PC-9 (cell line): ENCODE measurements at regions of chr5 and their contacts with region 1.

Region 1: GRCh38 chr5:78509884-78510769 is 138.4 kb downstream of the LHFPL2 start:
- DNase-seq: peak in 1 of 2 experiments; percentile 70
- H3K4me3 ChIP-seq: peak overlapping the region; percentile 45
- H3K27ac ChIP-seq: 0 out of 2 replicates have a peak overlapping the region, but pooled peaks have one; percentile 98
- H3K4me1 ChIP-seq: peaks cover 53% of the 10 kb centered on the region
- H3K27me3 ChIP-seq: no peaks in the 10 kb centered on the region
- CTCF ChIP-seq: no peak; the same call in 1 of the 2 replicates

Region 2: DNA sequence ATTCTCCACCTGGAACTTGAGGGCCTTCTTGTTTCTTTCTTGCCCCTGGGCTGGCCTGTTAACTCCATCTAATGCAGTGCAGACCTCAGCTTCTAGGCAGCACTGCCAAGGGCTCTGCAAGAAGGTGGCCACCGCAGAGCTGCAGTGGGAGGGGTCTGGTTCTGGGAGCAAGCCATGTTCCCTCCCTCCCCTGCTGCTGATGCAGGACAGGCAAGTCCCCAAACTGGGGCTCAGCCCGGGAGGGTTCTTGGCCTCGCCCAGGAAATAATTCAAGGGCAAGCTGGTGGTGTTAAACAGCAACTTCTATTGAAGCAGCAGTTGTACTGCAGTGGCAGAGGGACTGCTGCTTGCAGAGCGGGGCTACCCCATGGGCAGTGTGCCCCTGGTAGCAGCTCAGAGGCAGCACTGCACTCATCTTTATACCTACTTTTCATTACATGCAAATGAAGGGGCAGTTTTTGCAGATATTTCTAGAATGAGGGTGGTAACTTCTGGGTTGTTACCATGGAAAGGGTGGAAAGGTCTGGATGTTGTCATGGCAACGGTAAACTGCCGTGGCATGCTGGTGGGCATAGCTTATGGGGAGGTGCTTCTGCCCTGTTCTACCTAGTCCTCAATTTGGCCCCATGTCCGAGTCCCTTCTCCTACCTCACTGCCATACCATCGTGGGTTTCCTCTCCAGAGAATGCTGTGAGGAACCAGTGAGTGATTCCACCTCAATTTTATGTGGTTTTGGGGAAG is 1100.1 kb before region 1 on chr5:
- CTCF ChIA-PET with region 1: no interaction called
- POLR2A ChIA-PET with region 1: no interaction called
- intact Hi-C with region 1: no loop called
- DNase-seq: no peak
- H3K4me3 ChIP-seq: no peak overlapping the region
- H3K27ac ChIP-seq: no peak overlapping the region
- H3K4me1 ChIP-seq: no peaks in the 10 kb centered on the region
- H3K27me3 ChIP-seq: peaks cover 8% of the 10 kb centered on the region; the same call in 1 of the 2 replicates
- CTCF ChIP-seq: no peak

Region 3: DNA sequence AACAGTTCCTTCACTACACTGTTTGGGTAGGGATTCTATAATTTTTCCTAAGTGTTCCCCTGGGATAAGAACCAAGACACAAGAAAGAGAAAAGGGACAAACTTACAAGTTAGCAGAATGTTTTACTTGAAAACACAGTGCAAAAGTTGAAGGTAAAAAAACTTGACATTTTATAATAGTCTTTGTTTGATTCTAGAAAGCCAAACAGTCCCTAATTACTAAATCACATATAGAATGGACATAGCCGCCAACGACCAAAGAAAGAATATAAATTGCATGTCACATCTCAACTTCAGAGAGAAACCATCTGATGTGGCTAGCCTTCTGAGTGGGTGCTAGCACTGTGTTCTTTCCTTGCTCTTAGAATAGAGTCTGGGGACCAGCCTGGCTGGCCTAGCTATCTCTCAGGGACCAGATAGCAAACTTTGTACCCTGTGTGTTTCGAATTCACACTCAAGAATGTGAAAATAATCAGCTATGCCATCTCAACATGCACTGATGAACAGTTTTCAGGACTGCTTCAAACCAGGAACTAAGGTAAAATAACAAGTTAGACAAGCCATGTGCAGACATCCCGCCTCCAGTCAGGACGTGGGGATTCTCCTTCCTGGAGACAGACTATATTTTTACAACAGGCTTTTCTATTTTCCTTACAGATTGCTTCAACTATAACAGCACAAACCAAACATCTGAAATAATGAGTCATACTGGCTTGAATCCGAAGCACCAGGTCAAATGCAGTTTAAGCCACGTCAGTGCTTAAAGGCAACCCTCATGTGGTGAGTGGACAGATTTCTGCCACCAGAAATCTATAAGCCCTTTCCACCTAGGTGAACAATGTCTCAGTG is 84.7 kb after region 1 on chr5:
- CTCF ChIA-PET with region 1: no interaction called
- POLR2A ChIA-PET with region 1: no interaction called
- intact Hi-C with region 1: loop called (anchors 10 kb)
- DNase-seq: peak; percentile 70 to 99
- H3K4me3 ChIP-seq: no peak overlapping the region
- H3K27ac ChIP-seq: peak overlapping the region; percentile 95
- H3K4me1 ChIP-seq: peaks cover 92% of the 10 kb centered on the region
- H3K27me3 ChIP-seq: no peaks in the 10 kb centered on the region
- CTCF ChIP-seq: no peak

Region 4: GRCh38 chr5:78648359-78649210 is 138.5 kb after region 1 on chr5 and contains the start of gene LHFPL2:
- CTCF ChIA-PET with region 1: no interaction called
- POLR2A ChIA-PET with region 1: interaction called, 3 read pairs
- intact Hi-C with region 1: loop called (anchors 5 kb)
- DNase-seq: peak in 1 of 2 experiments; percentile 77
- H3K4me3 ChIP-seq: peak within 1 kb of the TSS; percentile 85
- H3K27ac ChIP-seq: peak within 1 kb of the TSS; percentile 75
- H3K4me1 ChIP-seq: peaks cover 12% of the 10 kb centered on the region
- H3K27me3 ChIP-seq: no peaks in the 10 kb centered on the region
- CTCF ChIP-seq: no peak
- total RNA-seq, gene LHFPL2: 10.1 and 14.0 TPM in 2 replicates